ENCODE measurements at regions of chr6 and their contacts with region 1.

Region 1: DNA sequence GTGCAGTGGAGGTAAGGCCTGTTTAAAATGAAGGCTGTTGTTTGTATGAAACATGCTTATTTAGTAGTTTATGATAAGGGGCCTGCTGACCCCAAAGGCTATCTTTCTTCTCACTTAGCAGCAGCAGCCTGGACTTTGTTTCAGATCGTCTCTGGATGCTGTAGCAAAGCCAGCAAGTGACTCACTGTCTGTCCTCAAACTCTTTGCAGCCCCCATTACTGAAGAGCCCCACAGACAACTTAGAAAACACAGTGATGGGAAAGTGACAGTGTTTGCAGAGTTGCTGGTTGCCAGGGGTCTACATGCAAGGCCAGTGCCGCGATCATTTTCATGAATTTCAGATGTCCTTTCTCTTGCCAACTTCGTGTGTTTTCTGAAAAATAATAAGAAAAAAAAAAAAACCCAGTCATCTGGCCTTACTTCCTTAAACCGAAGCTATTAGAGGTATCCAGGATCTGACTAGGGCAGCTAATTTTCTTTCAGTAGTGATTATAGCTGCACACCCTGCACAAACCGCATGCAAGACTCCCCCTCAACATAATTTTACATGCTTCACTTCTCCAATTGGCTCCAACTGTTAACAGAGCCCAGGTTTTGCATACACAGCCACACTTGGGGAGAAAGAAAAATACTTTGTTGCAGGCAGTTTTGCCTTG is 11.6 kb upstream of the F13A1 start:
- DNase-seq: peak; percentile 28 to 30 (median 29)
- H3K4me3 ChIP-seq: peak overlapping the region in 1 of 3 experiments; percentile 26
- H3K4me3 Mint-ChIP-seq: peak overlapping the region; percentile 20 to 43
- H3K27ac ChIP-seq: peak overlapping the region; percentile 27 to 45
- H3K27ac Mint-ChIP-seq: peak overlapping the region; percentile 83 to 91 (median 87)
- H3K4me1 ChIP-seq: peaks cover 50% of the 10 kb centered on the region in 2 donors
- H3K4me1 Mint-ChIP-seq: peaks cover 55% of the 10 kb centered on the region
- H3K27me3 ChIP-seq: no peaks in the 10 kb centered on the region
- H3K27me3 Mint-ChIP-seq: no peaks in the 10 kb centered on the region
- CTCF ChIP-seq: no peak

Region 2: DNA sequence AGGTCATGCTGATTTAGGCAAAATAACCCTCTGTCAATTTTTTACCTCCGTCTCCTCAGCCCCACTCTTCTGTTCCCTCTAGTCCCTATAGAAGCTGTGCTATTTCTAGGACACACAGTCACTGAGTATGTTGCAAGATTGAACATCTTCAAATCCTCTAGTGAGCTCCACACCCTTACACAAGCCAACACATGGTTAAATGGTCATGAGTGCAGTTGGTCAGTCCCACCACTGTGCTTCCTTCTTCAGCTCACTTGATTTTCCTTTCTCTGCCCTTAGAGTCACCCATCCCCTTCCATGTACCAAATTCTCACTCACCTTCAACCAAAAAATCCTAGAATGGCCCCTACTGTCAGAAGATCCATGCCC is 36.6 kb after region 1 on chr6:
- intact Hi-C with region 1: no loop called
- DNase-seq: peak; percentile 42 to 58 (median 54)
- H3K4me3 ChIP-seq: no peak overlapping the region
- H3K4me3 Mint-ChIP-seq: peak overlapping the region in 1 of 2 donors; percentile 61
- H3K27ac ChIP-seq: no peak overlapping the region
- H3K27ac Mint-ChIP-seq: peak overlapping the region in 6 of 7 donors; percentile 25 to 76 (median 31)
- H3K4me1 ChIP-seq: peaks cover 14 to 15% of the 10 kb centered on the region in 2 donors
- H3K4me1 Mint-ChIP-seq: peaks cover 13% of the 10 kb centered on the region
- H3K27me3 ChIP-seq: no peaks in the 10 kb centered on the region
- H3K27me3 Mint-ChIP-seq: peaks cover 0 to 3% (median 0%) of the 10 kb centered on the region in 3 donors
- CTCF ChIP-seq: no peak

Region 3: GRCh38 chr6:6390849-6391602 is 59.0 kb after region 1 on chr6:
- intact Hi-C with region 1: loop called in 1 of 2 experiments (anchors 5 kb)
- DNase-seq: peak; percentile 33 to 66 (median 47)
- H3K4me3 ChIP-seq: peak overlapping the region in 1 of 3 experiments; percentile 19
- H3K4me3 Mint-ChIP-seq: peak overlapping the region in 1 of 2 donors; percentile 12
- H3K27ac ChIP-seq: peak overlapping the region; percentile 58 to 77
- H3K27ac Mint-ChIP-seq: peak overlapping the region; percentile 67 to 91 (median 88)
- H3K4me1 ChIP-seq: peaks cover 77 to 91% of the 10 kb centered on the region in 2 donors
- H3K4me1 Mint-ChIP-seq: peaks cover 83% of the 10 kb centered on the region
- H3K27me3 ChIP-seq: no peaks in the 10 kb centered on the region
- H3K27me3 Mint-ChIP-seq: no peaks in the 10 kb centered on the region
- CTCF ChIP-seq: no peak

Region 4: DNA sequence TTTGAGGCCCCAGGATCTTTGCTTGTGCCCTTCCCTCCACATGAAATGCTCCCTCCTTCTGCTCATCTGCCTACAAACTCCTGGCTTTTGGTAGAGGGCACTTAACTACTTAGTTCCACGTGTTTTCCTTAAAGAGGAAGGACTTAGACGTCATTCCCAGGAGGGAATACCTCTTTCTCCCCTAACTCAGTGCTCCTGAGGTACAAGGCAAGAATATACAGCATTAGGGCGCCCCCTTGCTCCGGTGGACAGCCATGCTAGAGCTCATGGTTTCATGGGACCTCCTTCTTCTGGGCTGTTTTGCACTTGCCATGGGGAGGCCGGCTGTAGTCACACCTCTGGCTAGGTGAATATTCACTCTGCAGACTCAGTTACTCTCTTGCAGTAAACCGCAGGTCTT is 162.6 kb after region 1 on chr6:
- intact Hi-C with region 1: loop called in 1 of 2 experiments (anchors 10 kb)
- DNase-seq: peak; percentile 47 to 68 (median 67)
- H3K4me3 ChIP-seq: no peak overlapping the region
- H3K4me3 Mint-ChIP-seq: no peak overlapping the region
- H3K27ac ChIP-seq: no peak overlapping the region
- H3K27ac Mint-ChIP-seq: peak overlapping the region in 1 of 7 donors; percentile 45
- H3K4me1 ChIP-seq: peaks cover 32 to 49% of the 10 kb centered on the region in 2 donors
- H3K4me1 Mint-ChIP-seq: peaks cover 41% of the 10 kb centered on the region
- H3K27me3 ChIP-seq: no peaks in the 10 kb centered on the region
- H3K27me3 Mint-ChIP-seq: peaks cover 0 to 1% (median 1%) of the 10 kb centered on the region in 3 donors
- CTCF ChIP-seq: peak; percentile 79